Aorta (tissue), 5 donors: ENCODE measurements at regions of chr2 and their contacts with region 1.

Region 1: GRCh38 chr2:174465327-174465726 is 21.5 kb downstream of the GPR155 start:
- DNase-seq: no peak
- ATAC-seq: peak; percentile 41
- H3K4me3 ChIP-seq: no peak overlapping the region
- H3K27ac ChIP-seq: no peak overlapping the region
- H3K4me1 ChIP-seq: no peaks in the 10 kb centered on the region
- H3K27me3 ChIP-seq: no peaks in the 10 kb centered on the region

Region 2: DNA sequence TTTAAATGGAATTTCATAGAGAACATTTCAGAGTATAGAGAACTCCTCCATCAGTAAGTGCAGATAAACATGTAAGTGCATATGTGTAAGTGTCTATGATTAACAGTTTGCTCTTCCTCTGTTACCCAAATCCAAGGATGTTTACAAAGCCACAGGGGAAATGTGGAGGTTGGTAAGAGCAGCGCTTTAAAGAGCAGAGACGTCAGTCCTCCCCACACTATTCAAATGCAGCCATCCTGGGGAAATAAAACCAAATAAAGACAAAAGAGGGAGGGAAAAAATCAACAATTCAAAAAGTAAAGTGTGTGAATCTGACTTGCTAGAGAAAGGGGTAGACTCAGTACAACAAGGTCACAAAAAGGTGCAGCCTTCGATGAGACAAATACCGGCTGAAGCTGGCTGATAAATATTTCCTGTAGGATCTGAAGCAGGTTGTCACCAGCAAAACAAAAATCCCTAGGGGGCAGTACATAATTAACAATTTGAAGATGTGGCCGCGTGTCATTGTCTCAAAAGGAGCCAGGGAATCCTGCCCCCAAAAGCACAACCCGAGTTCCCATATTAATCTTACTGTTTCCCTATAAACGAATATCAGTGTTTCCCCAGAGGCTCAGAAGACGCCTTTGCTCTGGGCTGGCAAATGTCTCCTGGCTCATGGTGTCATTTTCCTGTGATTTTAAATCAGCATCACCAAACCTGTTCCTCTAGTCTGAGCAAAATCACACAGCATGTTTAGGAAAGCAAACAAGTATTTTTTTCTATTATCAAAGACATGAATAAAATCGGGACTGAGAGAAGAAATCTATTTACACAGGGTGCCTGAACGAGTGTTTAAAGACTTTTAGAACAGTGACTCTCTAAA is 894.1 kb before region 1 on chr2:
- intact Hi-C with region 1: no loop called
- DNase-seq: no peak
- ATAC-seq: no peak
- H3K4me3 ChIP-seq: no peak overlapping the region
- H3K27ac ChIP-seq: no peak overlapping the region
- H3K4me1 ChIP-seq: no peaks in the 10 kb centered on the region
- H3K27me3 ChIP-seq: no peaks in the 10 kb centered on the region

Region 3: GRCh38 chr2:174522553-174522952 is 57.2 kb after region 1 on chr2:
- intact Hi-C with region 1: loop called (anchors 5 to 10 kb)
- DNase-seq: no peak
- ATAC-seq: no peak
- H3K4me3 ChIP-seq: no peak overlapping the region
- H3K27ac ChIP-seq: no peak overlapping the region
- H3K4me1 ChIP-seq: no peaks in the 10 kb centered on the region
- H3K27me3 ChIP-seq: no peaks in the 10 kb centered on the region

Region 4: DNA sequence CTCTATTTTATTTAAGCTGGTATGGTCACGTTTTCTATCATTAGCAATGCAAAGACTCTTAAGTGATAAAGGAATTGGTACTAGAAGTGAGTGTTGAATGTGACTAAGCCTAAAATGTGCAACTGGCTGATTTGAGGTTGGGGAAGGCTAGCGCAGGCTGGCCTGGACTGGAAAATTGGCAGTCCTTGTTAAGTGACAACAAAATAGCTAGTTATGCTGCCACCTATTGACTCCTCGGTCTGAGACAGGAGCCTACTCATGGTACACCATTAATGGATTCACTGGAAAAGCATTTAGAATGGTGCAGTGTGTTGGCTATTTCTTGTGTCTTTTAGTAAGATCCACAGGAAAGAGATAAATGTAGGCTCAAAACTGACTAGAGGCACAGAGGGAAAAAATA is 138.0 kb after region 1 on chr2:
- intact Hi-C with region 1: loop called (anchors 1 to 2 kb)
- DNase-seq: peak in 1 of 2 donors; percentile 76
- ATAC-seq: peak; percentile 88
- H3K4me3 ChIP-seq: no peak overlapping the region
- H3K27ac ChIP-seq: no peak overlapping the region
- H3K4me1 ChIP-seq: peaks cover 0 to 3% of the 10 kb centered on the region in 2 donors
- H3K27me3 ChIP-seq: no peaks in the 10 kb centered on the region

Region 5: DNA sequence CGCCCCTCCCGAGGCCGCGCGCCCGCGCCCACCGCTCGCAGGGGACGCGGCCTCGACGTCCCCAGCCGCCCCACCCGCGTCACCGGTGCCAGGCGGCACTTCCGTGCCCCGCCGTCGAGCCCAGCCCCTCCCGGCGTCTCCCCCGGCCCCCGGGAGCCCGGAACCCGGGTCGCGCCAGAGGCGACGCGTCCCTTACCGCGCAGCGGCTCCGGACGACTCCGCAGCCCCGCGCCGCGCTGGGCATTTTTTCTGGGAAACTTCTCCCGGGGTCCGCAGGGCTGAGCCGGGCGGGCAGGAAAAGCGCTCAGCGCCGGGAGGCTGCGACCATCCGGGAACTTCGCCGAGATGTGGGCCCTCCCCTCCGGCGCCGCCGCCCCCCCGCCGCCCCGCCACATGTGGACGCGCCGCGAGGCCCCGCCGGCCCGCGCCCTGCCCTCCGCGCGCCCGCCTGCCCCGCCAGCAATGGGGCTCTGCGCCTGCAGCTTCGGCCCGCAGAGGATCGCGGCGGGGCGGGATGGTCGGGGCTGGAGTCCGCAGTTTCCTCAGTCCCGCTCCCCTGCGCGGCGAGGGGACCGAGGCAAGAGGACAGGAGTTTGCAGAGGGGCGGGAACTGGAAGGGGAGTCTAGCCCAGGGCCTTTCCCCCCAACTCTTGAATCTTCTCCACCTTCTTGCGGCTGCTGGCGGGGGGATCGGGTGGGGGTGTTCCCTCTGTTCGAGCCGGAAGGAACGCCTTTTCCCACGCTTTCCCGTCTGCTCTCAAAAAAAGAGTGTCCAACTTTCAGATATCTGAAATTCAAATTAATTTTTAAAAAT is 217.5 kb after region 1 on chr2:
- intact Hi-C with region 1: loop called in 1 of 2 experiments (anchors 5 kb)
- DNase-seq: peak; percentile 83 to 94
- ATAC-seq: peak; percentile 88
- H3K4me3 ChIP-seq: peak overlapping the region; percentile 85 to 86
- H3K27ac ChIP-seq: peak overlapping the region; percentile 69 to 81
- H3K4me1 ChIP-seq: peaks cover 0 to 4% of the 10 kb centered on the region in 2 donors
- H3K27me3 ChIP-seq: no peaks in the 10 kb centered on the region

Region 6: GRCh38 chr2:174688079-174688478 is 222.8 kb after region 1 on chr2:
- intact Hi-C with region 1: loop called (anchors 5 kb)
- DNase-seq: no peak
- ATAC-seq: no peak
- H3K4me3 ChIP-seq: no peak overlapping the region
- H3K27ac ChIP-seq: no peak overlapping the region
- H3K4me1 ChIP-seq: no peaks in the 10 kb centered on the region
- H3K27me3 ChIP-seq: no peaks in the 10 kb centered on the region